Mammary epithelial cell (primary cell): ENCODE measurements at regions of chr2 and their contacts with region 1.

Region 1: DNA sequence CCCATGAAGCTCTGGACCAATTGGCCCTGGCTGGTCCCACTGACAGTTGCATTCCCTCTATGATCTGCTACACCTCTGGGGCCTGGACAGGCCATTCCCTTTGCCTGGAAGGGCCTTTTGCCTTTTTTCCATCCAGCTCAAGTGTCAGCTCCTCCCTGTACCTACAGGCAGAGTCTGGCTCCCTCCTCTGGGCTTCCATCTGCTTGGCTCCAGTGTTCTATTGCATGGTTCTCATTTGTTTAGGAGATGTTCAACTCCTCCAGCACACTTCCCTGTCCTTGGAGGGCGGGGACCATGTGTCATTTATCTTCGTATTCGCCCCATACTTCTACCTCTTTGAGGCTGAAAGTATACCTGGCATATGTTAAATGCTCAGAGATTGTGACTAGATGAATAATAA is 61.1 kb downstream of the PRKCE start:
- DNase-seq: no peak
- H3K4me3 ChIP-seq: no peak overlapping the region
- H3K27ac ChIP-seq: no peak overlapping the region
- H3K4me1 ChIP-seq: peaks cover 6% of the 10 kb centered on the region
- H3K27me3 ChIP-seq: no peaks in the 10 kb centered on the region
- CTCF ChIP-seq: peak in 1 of 2 donors; percentile 54

Region 2: GRCh38 chr2:45643543-45644542 is 68.7 kb before region 1 on chr2:
- CTCF ChIA-PET with region 1: no interaction called
- dilution Hi-C with region 1: no loop called
- in situ Hi-C with region 1: no loop called
- intact Hi-C with region 1: loop called (anchors 1 kb)
- DNase-seq: peak; percentile 49
- H3K4me3 ChIP-seq: peak overlapping the region; percentile 48 to 65 (median 51)
- H3K27ac ChIP-seq: no peak overlapping the region
- H3K4me1 ChIP-seq: peaks cover 12% of the 10 kb centered on the region
- H3K27me3 ChIP-seq: peaks cover 2% of the 10 kb centered on the region
- CTCF ChIP-seq: peak; percentile 61 to 83